ENCODE measurements at regions of chr2 and their contacts with region 1.

Region 1: DNA sequence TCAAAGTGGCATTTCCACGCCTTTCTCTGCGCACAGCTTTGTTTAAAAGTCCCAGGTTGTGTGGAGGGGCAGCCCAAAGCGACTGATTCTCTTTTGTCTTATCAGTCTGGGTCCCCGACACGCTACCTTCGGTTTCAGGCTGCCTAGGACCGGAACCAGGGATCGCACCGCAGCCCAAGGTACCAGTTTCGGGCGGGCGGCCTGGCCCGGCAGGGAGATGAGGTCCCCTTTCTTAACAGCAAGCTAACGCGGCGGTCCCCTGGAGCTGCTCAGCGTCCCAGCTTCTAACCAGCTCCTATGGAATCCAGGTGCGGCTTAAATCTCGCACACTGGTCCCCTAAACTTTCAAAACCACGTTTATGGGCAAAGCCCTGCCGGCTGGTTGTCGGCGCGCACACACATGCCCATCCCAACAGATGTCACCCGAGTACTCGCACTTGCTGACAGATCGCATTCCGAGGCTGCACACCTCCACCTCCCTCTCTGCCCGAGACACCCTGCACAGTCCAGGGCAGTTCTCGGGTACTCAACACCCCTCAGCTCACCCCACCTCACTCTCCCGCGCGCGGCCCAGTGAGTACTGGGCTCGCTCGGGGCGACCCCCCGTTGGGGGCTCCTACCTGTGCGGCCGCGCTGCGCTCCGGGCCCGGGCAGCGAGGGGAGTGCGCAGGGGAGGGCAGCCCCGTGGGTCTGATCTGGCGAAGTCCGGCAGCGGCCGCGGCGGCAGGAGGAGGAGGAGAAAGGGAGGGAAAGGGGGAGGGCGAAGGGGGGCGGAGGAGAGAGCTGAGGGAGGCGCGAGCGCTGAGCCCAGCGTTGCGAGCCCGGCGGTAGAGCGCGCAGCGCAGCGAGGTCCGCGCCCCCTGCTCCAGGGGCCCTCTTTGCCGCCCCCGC is at the start of gene EFEMP1:
- DNase-seq: peak; percentile 87
- H3K4me3 ChIP-seq: peak within 1 kb of the TSS; percentile 77 to 84 (median 80)
- H3K27ac ChIP-seq: peak within 1 kb of the TSS; percentile 51
- H3K4me1 ChIP-seq: peaks cover 13% of the 10 kb centered on the region
- H3K27me3 ChIP-seq: no peaks in the 10 kb centered on the region
- CTCF ChIP-seq: peak in 1 of 2 donors; percentile 26
- total RNA-seq, gene EFEMP1: 183 to 440 TPM

Region 2: GRCh38 chr2:55771612-55772011 is 151.7 kb before region 1 on chr2:
- CTCF ChIA-PET with region 1: interaction called, 7 read pairs
- dilution Hi-C with region 1: no loop called
- in situ Hi-C with region 1: no loop called
- intact Hi-C with region 1: loop called (anchors 2 kb)
- DNase-seq: peak; percentile 35
- H3K4me3 ChIP-seq: no peak overlapping the region
- H3K27ac ChIP-seq: no peak overlapping the region
- H3K4me1 ChIP-seq: peaks cover 18% of the 10 kb centered on the region
- H3K27me3 ChIP-seq: no peaks in the 10 kb centered on the region
- CTCF ChIP-seq: peak; percentile 50 to 71

Region 3: GRCh38 chr2:55843096-55843993 is 80.0 kb before region 1 on chr2:
- CTCF ChIA-PET with region 1: interaction called, 3 read pairs
- dilution Hi-C with region 1: no loop called
- in situ Hi-C with region 1: no loop called
- intact Hi-C with region 1: loop called (anchors 1 kb)
- DNase-seq: peak; percentile 92
- H3K4me3 ChIP-seq: no peak overlapping the region
- H3K27ac ChIP-seq: no peak overlapping the region
- H3K4me1 ChIP-seq: peaks cover 28% of the 10 kb centered on the region
- H3K27me3 ChIP-seq: no peaks in the 10 kb centered on the region
- CTCF ChIP-seq: no peak

Region 4: DNA sequence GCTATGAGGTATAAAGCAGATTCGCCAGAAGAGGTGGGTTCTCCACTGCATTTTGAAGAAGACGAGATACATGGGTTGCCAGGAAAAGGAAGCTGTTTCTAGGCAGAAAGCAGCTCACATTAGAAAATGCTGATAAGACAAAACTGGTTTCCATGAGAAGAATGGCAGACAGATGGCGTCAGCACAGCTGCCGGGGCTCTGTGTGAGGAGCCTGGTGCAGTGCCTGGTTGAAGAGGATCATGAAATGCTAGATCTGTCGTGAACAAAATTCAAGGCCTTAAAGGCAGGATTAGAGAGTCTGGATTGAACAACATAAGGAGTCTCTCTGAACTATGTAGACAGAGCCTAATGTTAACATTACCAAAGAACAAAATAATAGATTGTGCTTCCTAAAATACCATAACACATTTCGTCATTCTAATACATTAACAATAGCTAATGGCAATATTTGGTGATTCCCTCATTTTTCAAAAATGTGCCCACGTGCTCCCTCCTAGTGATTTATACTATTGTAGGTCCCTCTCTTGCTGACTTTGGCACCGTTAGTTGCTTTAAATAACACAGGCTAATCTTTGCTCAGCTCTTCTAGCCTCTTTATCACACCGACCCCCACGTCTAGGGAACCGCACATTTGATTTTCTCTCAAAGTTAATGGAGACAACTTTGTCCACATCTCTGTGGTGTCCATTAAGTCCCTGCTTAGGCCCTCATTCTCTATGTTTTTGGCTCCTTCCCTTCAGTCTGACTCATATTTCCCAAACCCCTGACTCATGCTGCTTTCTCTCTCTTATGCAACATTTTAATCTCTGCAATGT is 38.0 kb before region 1 on chr2:
- CTCF ChIA-PET with region 1: no interaction called
- dilution Hi-C with region 1: no loop called
- in situ Hi-C with region 1: no loop called
- intact Hi-C with region 1: loop called (anchors 2 kb)
- DNase-seq: peak; percentile 90
- H3K4me3 ChIP-seq: no peak overlapping the region
- H3K27ac ChIP-seq: peak overlapping the region; percentile 80
- H3K4me1 ChIP-seq: peaks cover 48% of the 10 kb centered on the region
- H3K27me3 ChIP-seq: no peaks in the 10 kb centered on the region
- CTCF ChIP-seq: no peak

Region 5: DNA sequence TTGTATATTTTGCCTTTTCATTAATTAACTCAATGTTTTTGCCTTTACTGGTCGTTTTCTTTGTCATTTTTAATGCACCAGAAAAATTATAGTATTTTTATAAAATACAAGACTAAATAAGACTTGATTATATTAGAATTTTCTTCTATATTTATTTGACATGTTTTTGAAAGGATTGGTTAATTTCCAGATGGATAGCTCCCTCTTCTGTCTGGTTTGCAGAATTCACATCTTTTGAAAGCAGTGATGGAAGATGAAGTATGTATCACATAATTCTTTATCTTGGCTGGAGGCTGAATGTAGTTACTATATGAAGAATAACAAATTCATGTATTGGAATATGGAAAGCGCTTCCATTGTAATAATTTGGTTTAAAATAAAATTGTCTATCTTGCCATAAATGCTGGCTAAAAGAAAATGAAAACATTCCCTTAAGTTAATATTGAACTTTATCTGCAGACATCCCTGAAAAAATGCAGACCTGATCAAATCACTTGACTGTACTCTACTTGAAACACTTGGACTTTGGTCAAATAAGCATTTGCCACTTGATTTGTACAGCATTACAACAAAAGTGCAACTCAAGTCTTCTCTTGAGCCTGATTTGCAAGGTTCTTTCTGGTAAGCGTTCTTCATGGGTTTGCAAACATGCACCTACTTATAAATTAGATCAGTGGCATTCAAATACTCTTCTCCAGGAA is 86.6 kb after region 1 on chr2:
- CTCF ChIA-PET with region 1: no interaction called
- dilution Hi-C with region 1: no loop called
- in situ Hi-C with region 1: no loop called
- intact Hi-C with region 1: loop called (anchors 1 kb)
- DNase-seq: peak; percentile 35
- H3K4me3 ChIP-seq: no peak overlapping the region
- H3K27ac ChIP-seq: no peak overlapping the region
- H3K4me1 ChIP-seq: no peaks in the 10 kb centered on the region
- H3K27me3 ChIP-seq: no peaks in the 10 kb centered on the region
- CTCF ChIP-seq: peak; percentile 47 to 68

Region 6: DNA sequence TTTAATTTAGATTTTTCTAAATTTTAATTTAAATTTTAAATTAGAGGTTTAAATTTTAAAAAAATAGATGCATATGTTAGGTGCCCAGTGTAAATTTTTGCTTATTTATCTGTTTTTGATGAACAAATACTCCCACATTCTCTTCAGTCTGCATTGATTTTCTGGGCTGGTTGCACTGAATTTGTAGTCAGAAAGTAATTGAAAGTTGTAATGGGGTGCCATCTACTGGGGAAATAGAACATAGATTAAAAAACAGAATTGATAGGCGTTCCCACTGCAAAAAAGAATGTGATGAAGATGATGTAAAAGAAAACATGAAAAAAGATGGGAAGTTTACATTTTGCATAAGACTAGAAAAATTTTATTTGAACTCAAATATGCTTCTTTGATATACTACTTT is 208.8 kb after region 1 on chr2:
- CTCF ChIA-PET with region 1: no interaction called
- dilution Hi-C with region 1: no loop called
- in situ Hi-C with region 1: no loop called
- intact Hi-C with region 1: no loop called
- DNase-seq: peak; percentile 17
- H3K4me3 ChIP-seq: no peak overlapping the region
- H3K27ac ChIP-seq: no peak overlapping the region
- H3K4me1 ChIP-seq: no peaks in the 10 kb centered on the region
- H3K27me3 ChIP-seq: peaks cover 4% of the 10 kb centered on the region
- CTCF ChIP-seq: peak; percentile 42 to 57

Measured in mammary epithelial cell (primary cell).